BJ (cell line): ENCODE measurements at regions of chr11 and their contacts with region 1.

Region 1: GRCh38 chr11:71240865-71241691 is 11.3 kb downstream of the SHANK2 start:
- DNase-seq: peak; percentile 59
- H3K4me3 ChIP-seq: no peak overlapping the region
- H3K27me3 ChIP-seq: peaks cover 6% of the 10 kb centered on the region; the same call in 1 of the 2 replicates
- CTCF ChIP-seq: no peak

Region 2: GRCh38 chr11:71251761-71252443 is 10.8 kb after region 1 on chr11:
- CTCF ChIA-PET with region 1: interaction called, 26 read pairs
- POLR2A ChIA-PET with region 1: interaction called, 3 read pairs
- DNase-seq: no peak
- H3K4me3 ChIP-seq: peak overlapping the region; percentile 44
- H3K27me3 ChIP-seq: peaks cover 33% of the 10 kb centered on the region
- CTCF ChIP-seq: peak; percentile 13; the same call in 1 of the 2 replicates

Region 3: GRCh38 chr11:71543866-71544265 is 302.8 kb after region 1 on chr11:
- CTCF ChIA-PET with region 1: no interaction called
- POLR2A ChIA-PET with region 1: no interaction called
- DNase-seq: no peak
- H3K4me3 ChIP-seq: no peak overlapping the region
- H3K27me3 ChIP-seq: peaks cover 2% of the 10 kb centered on the region; the same call in 1 of the 2 replicates
- CTCF ChIP-seq: no peak